MCF 10A (cell line): ENCODE measurements at regions of chr10 and their contacts with region 1.

Region 1: GRCh38 chr10:90862908-90863514 is 5.2 kb upstream of the HTR7 start:
- DNase-seq: peak; percentile 61
- H3K4me3 Mint-ChIP-seq: no peak overlapping the region
- H3K27ac Mint-ChIP-seq: no peak overlapping the region
- H3K4me1 Mint-ChIP-seq: peaks cover 9% of the 10 kb centered on the region
- H3K27me3 Mint-ChIP-seq: no peaks in the 10 kb centered on the region
- CTCF ChIP-seq: peak; percentile 93

Region 2: DNA sequence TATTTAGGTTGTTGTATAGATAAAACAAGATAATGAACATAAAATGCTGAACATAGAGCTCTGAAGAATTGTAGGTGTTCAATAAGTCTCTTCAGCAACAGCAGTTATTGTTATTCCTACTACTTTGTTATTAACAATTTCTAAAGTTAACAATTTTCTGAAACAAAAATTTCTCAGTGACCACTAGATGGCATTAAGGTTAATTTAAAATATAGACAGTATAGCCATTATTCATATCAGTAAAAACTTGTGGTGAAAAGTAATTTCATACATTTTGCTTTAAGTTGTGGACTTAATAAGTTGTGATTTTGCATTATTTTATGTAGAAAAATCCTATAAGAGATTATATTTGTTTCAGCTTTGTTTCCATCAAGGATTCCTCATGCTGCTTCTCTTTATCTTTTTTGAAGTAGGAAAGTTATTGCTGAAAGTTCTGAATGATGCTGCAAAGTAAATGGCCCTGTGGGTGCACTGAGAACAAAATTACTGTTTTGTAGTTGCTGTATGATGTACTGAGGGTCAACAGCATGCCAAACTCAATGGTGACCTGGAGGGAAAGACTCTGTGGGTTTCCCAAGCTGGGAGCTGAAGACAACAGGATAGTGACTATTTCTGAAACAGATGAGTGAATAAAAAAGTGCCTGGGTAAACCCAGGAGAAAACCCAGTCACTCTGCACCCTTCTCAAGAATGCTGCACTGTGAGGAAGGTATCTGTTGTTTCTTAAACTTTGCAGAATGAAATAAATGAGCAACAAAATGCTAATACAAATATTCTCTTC is 908.0 kb before region 1 on chr10:
- CTCF ChIA-PET with region 1: no interaction called
- POLR2A ChIA-PET with region 1: no interaction called
- intact Hi-C with region 1: loop called (anchors 5 kb)
- DNase-seq: peak; percentile 13
- H3K4me3 Mint-ChIP-seq: no peak overlapping the region
- H3K27ac Mint-ChIP-seq: no peak overlapping the region
- H3K4me1 Mint-ChIP-seq: no peaks in the 10 kb centered on the region
- H3K27me3 Mint-ChIP-seq: no peaks in the 10 kb centered on the region
- CTCF ChIP-seq: peak; percentile 44

Region 3: GRCh38 chr10:90288391-90288933 is 574.5 kb before region 1 on chr10:
- CTCF ChIA-PET with region 1: no interaction called
- POLR2A ChIA-PET with region 1: no interaction called
- intact Hi-C with region 1: loop called (anchors 5 kb)
- DNase-seq: peak; percentile 42
- H3K4me3 Mint-ChIP-seq: no peak overlapping the region
- H3K27ac Mint-ChIP-seq: no peak overlapping the region
- H3K4me1 Mint-ChIP-seq: peaks cover 25% of the 10 kb centered on the region
- H3K27me3 Mint-ChIP-seq: no peaks in the 10 kb centered on the region
- CTCF ChIP-seq: peak; percentile 31

Region 4: GRCh38 chr10:90652519-90652918 is 210.5 kb before region 1 on chr10:
- CTCF ChIA-PET with region 1: interaction called, 3 read pairs
- POLR2A ChIA-PET with region 1: no interaction called
- intact Hi-C with region 1: loop called (anchors 1 kb)
- DNase-seq: peak; percentile 49
- H3K4me3 Mint-ChIP-seq: no peak overlapping the region
- H3K27ac Mint-ChIP-seq: no peak overlapping the region
- H3K4me1 Mint-ChIP-seq: no peaks in the 10 kb centered on the region
- H3K27me3 Mint-ChIP-seq: no peaks in the 10 kb centered on the region
- CTCF ChIP-seq: peak; percentile 57

Region 5: DNA sequence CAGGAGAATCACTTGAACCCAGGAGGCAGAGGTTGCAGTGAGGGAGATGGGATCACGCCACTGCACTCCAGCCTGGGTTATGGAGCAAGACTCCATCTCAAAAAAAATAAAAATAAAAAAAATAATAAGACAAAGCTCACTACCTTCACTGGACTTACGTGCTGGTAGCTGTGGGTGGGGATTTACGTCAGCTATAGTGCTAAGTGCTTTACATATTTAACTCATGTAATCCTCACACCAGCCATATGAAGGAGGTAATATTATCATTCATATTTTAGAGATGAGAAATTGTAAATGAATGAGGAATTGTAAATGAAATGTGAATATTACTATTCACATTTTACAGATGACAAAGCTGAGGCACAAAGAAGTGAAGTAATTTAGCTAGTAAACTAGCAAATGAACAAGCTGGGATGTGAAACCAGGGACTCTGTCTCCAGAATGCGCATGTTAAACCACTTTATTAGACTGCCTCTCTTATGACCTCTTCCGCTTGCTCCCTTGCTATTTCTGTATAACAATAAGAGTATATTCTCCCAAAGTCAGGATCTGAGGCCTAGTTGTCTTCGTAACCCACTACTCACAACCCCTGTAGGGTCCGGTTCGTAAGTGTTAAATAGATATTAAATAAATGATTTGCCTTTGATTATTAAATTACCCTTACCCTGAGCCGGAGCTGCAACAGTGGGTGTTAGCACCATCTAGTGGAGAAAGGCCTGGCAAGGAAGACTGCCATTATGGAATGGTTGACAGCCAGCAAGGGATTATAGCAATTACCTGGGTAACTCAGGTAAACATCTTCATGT is 75.4 kb before region 1 on chr10:
- CTCF ChIA-PET with region 1: interaction called, 15 read pairs
- POLR2A ChIA-PET with region 1: interaction called, 3 read pairs
- intact Hi-C with region 1: no loop called
- DNase-seq: peak; percentile 59
- H3K4me3 Mint-ChIP-seq: no peak overlapping the region
- H3K27ac Mint-ChIP-seq: no peak overlapping the region
- H3K4me1 Mint-ChIP-seq: peaks cover 21% of the 10 kb centered on the region
- H3K27me3 Mint-ChIP-seq: no peaks in the 10 kb centered on the region
- CTCF ChIP-seq: peak; percentile 77

Region 6: DNA sequence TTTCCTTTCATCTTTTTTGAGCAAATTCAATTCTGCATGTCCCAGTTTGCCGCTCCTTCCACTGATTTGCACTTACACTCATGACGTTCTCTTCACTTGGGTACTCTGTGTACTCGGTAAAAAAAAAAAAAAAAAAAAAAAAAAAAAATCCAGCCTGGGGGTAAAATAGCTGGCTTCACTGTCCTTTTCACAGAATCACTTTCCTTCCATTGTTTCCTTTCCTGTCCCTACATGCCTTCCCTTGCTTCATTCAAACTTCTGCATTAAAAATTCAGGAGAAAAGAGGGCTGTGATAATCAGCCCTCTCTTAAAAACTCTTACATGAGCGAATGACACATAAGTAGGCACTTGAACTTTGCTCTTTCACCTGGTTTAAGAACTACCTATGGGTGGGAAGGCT is 49.2 kb after region 1 on chr10:
- CTCF ChIA-PET with region 1: no interaction called
- POLR2A ChIA-PET with region 1: no interaction called
- intact Hi-C with region 1: no loop called
- DNase-seq: peak; percentile 61
- H3K4me3 Mint-ChIP-seq: peak overlapping the region; percentile 31
- H3K27ac Mint-ChIP-seq: peak overlapping the region; percentile 83
- H3K4me1 Mint-ChIP-seq: peaks cover 16% of the 10 kb centered on the region
- H3K27me3 Mint-ChIP-seq: no peaks in the 10 kb centered on the region
- CTCF ChIP-seq: no peak